ENCODE measurements at regions of chr5 and their contacts with region 1.

Region 1: GRCh38 chr5:88690409-88691229 is 192.4 kb downstream of the MEF2C start:
- DNase-seq: peak; percentile 75
- H3K4me3 Mint-ChIP-seq: peak overlapping the region; percentile 60
- H3K27ac Mint-ChIP-seq: peak overlapping the region; percentile 88
- H3K4me1 Mint-ChIP-seq: peaks cover 9% of the 10 kb centered on the region
- H3K27me3 Mint-ChIP-seq: peaks cover 97% of the 10 kb centered on the region

Region 2: GRCh38 chr5:87780831-87781760 is 909.5 kb before region 1 on chr5:
- CTCF ChIA-PET with region 1: interaction called, 41 read pairs
- DNase-seq: peak; percentile 84
- H3K4me3 Mint-ChIP-seq: no peak overlapping the region
- H3K27ac Mint-ChIP-seq: no peak overlapping the region
- H3K4me1 Mint-ChIP-seq: no peaks in the 10 kb centered on the region
- H3K27me3 Mint-ChIP-seq: peaks cover 15% of the 10 kb centered on the region

Region 3: DNA sequence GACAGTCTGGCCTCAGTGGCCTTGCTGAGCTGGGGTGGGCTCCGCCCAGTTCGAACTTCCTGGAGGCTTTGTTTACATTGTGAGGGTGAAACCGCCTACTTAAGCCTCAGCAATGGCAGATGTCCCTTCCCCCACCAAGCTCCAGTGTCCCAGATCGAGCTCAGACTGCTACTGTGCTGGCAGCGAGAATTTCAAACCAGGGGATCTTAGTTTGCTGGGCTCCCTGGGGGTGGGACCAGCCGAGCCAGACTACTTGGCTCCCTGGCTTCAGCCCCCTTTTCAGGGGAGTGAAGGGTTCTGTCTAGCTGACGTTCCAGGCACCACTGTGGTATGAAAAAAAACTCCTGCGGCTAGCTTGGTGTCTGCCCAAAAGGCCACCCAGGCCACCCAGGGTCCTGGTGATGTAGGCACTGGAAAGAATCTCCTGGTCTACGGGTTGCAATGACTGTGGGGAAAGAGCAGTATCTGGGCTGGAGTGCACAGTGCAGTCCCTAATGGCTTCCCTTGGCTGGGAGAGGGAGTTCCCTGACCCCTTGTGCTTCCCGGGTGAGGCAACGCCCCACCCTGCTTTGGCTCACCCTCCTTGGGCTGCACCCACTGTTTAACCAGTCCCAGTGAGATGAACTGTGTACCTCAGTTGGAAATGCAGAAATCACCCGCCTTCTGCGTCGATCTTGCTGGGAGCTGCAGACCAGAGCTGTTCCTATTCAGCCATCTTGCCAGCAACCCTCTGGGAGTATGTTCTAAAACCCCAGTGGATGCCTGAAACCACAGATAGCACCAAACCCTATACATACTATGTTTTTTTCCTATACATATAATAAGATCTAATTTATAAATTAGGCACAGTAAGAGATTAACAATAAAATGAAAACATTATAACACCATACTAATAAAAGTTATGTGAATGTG is 517.5 kb before region 1 on chr5:
- CTCF ChIA-PET with region 1: no interaction called
- DNase-seq: no peak
- H3K4me3 Mint-ChIP-seq: no peak overlapping the region
- H3K27ac Mint-ChIP-seq: no peak overlapping the region
- H3K4me1 Mint-ChIP-seq: no peaks in the 10 kb centered on the region
- H3K27me3 Mint-ChIP-seq: peaks cover 14% of the 10 kb centered on the region

Region 4: GRCh38 chr5:88660947-88661805 is 29.4 kb before region 1 on chr5:
- CTCF ChIA-PET with region 1: interaction called, 12 read pairs
- DNase-seq: peak; percentile 50
- H3K4me3 Mint-ChIP-seq: peak overlapping the region; percentile 48
- H3K27ac Mint-ChIP-seq: peak overlapping the region; percentile 58
- H3K4me1 Mint-ChIP-seq: peaks cover 23% of the 10 kb centered on the region
- H3K27me3 Mint-ChIP-seq: peaks cover 47% of the 10 kb centered on the region

Region 5: GRCh38 chr5:88666761-88667495 is 23.7 kb before region 1 on chr5:
- CTCF ChIA-PET with region 1: interaction called, 11 read pairs
- DNase-seq: no peak
- H3K4me3 Mint-ChIP-seq: peak overlapping the region; percentile 75
- H3K27ac Mint-ChIP-seq: peak overlapping the region; percentile 19
- H3K4me1 Mint-ChIP-seq: peaks cover 27% of the 10 kb centered on the region
- H3K27me3 Mint-ChIP-seq: peaks cover 59% of the 10 kb centered on the region

Region 6: GRCh38 chr5:88673253-88674105 is 17.1 kb before region 1 on chr5:
- CTCF ChIA-PET with region 1: interaction called, 13 read pairs
- DNase-seq: no peak
- H3K4me3 Mint-ChIP-seq: peak overlapping the region; percentile 49
- H3K27ac Mint-ChIP-seq: peak overlapping the region; percentile 70
- H3K4me1 Mint-ChIP-seq: peaks cover 32% of the 10 kb centered on the region
- H3K27me3 Mint-ChIP-seq: peaks cover 78% of the 10 kb centered on the region

Region 7: GRCh38 chr5:88680253-88681132 is 10.1 kb before region 1 on chr5:
- CTCF ChIA-PET with region 1: interaction called, 16 read pairs
- DNase-seq: peak; percentile 80
- H3K4me3 Mint-ChIP-seq: peak overlapping the region; percentile 33
- H3K27ac Mint-ChIP-seq: peak overlapping the region; percentile 28
- H3K4me1 Mint-ChIP-seq: peaks cover 14% of the 10 kb centered on the region
- H3K27me3 Mint-ChIP-seq: peaks cover 91% of the 10 kb centered on the region